Ovary (tissue), 10 donors: ENCODE measurements at regions of chr2 and their contacts with region 1.

Region 1: GRCh38 chr2:17672583-17673317 is 80.9 kb downstream of the SMC6 start:
- DNase-seq: no peak
- H3K4me3 ChIP-seq: no peak overlapping the region
- H3K27ac ChIP-seq: no peak overlapping the region
- H3K4me1 ChIP-seq: no peaks in the 10 kb centered on the region
- H3K27me3 ChIP-seq: no peaks in the 10 kb centered on the region
- CTCF ChIP-seq: no peak
- EP300 ChIP-seq: no peak
- POLR2A ChIP-seq: no peak

Region 2: GRCh38 chr2:16773080-16773713 is 899.6 kb before region 1 on chr2:
- intact Hi-C with region 1: loop called in 3 of 4 experiments (anchors 5 to 10 kb)
- DNase-seq: peak in 1 of 5 donors; percentile 27
- H3K4me3 ChIP-seq: no peak overlapping the region
- H3K27ac ChIP-seq: no peak overlapping the region
- H3K4me1 ChIP-seq: peaks cover 1% of the 10 kb centered on the region
- H3K27me3 ChIP-seq: no peaks in the 10 kb centered on the region
- CTCF ChIP-seq: peak in 2 of 3 donors; percentile 15 to 49
- EP300 ChIP-seq: no peak
- POLR2A ChIP-seq: no peak

Region 3: DNA sequence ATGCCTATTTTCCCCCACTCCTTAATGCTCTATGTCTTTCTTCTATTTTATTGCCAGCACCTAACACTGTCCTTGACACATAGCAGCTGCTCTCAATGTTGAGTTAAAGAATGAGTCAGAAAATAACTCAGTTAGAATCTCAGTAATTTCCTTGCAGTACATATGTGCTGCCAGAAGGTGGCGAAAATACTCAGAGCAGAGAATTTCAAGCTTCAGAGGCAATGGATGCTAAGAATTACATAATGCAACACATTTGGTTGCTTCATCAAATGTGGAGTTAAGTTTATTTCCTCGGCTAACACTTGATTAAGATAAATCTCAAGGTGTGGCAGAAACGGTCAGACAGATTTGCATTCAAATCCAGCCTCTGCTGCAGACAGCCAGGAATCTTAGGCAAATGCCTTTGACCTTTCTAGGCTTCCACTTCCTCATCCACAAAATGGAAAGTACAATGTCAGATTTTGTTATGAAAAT is 26.6 kb before region 1 on chr2:
- intact Hi-C with region 1: loop called in 1 of 4 experiments (anchors 2 kb)
- DNase-seq: peak in 3 of 5 donors; percentile 51 to 79 (median 52)
- H3K4me3 ChIP-seq: no peak overlapping the region
- H3K27ac ChIP-seq: no peak overlapping the region
- H3K4me1 ChIP-seq: peaks cover 2% of the 10 kb centered on the region
- H3K27me3 ChIP-seq: no peaks in the 10 kb centered on the region
- CTCF ChIP-seq: peak; percentile 80 to 89 (median 83)
- EP300 ChIP-seq: no peak
- POLR2A ChIP-seq: no peak